Ascending aorta (tissue), 2 donors: ENCODE measurements at regions of chr12 and their contacts with region 1.

Region 1: DNA sequence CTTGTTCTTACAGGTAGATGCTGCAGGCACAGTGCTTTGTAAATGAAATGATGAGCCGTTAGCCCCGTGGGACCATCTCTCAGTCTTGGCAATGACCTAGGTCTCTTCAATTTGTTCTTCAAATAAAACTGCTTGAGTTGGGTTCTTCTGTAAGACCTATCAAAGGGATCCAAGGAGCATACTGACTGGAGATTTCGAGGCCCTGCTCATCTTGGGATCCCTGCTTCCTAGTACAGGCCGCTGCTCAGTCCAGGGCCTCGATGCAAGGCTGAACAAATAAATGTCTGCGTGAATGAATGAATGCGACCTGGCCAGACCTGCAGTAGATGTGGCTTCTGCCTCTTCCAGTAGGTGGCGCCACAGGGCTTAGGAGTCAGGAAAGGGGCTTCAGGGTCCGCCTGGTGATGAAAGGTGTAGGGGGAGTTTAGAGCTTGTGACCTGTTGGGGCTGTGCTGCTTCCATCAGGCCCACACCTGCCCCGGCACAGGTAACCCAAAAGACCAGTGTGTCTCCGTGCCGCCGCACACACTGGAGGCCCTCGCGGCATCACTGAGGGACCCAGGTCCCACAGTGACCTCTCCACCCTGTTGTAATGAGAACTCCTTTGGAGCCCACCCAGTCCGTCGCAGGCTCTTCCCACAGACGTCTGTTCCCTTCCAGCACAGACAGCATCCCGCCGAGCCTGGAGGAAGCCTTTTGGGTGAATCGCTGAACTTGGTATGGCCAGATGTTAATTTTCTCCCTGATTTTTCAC is 4.4 kb downstream of the CACNA1C start:
- DNase-seq: peak in 1 of 2 donors; percentile 81
- H3K4me3 ChIP-seq: peak overlapping the region in 1 of 2 donors; percentile 99
- H3K27ac ChIP-seq: peak overlapping the region; percentile 77 to 99
- H3K4me1 ChIP-seq: peaks cover 12 to 41% of the 10 kb centered on the region in 2 donors
- H3K27me3 ChIP-seq: no peaks in the 10 kb centered on the region
- CTCF ChIP-seq: peak; percentile 89 to 91 (median 90)

Region 2: GRCh38 chr12:1690578-1691122 is 366.6 kb before region 1 on chr12 and contains the start of gene ADIPOR2:
- intact Hi-C with region 1: no loop called
- DNase-seq: peak; percentile 79 to 98
- H3K4me3 ChIP-seq: peak within 1 kb of the TSS; percentile 86 to 95
- H3K27ac ChIP-seq: peak within 1 kb of the TSS; percentile 88 to 95
- H3K4me1 ChIP-seq: peaks cover 0 to 10% of the 10 kb centered on the region in 2 donors
- H3K27me3 ChIP-seq: no peaks in the 10 kb centered on the region
- CTCF ChIP-seq: no peak
- total RNA-seq, gene ADIPOR2: 25.7 TPM

Region 3: GRCh38 chr12:1993341-1993740 is 63.9 kb before region 1 on chr12:
- intact Hi-C with region 1: no loop called
- DNase-seq: no peak
- H3K4me3 ChIP-seq: no peak overlapping the region
- H3K27ac ChIP-seq: no peak overlapping the region
- H3K4me1 ChIP-seq: peaks cover 0 to 2% of the 10 kb centered on the region in 2 donors
- H3K27me3 ChIP-seq: no peaks in the 10 kb centered on the region
- CTCF ChIP-seq: no peak

Region 4: DNA sequence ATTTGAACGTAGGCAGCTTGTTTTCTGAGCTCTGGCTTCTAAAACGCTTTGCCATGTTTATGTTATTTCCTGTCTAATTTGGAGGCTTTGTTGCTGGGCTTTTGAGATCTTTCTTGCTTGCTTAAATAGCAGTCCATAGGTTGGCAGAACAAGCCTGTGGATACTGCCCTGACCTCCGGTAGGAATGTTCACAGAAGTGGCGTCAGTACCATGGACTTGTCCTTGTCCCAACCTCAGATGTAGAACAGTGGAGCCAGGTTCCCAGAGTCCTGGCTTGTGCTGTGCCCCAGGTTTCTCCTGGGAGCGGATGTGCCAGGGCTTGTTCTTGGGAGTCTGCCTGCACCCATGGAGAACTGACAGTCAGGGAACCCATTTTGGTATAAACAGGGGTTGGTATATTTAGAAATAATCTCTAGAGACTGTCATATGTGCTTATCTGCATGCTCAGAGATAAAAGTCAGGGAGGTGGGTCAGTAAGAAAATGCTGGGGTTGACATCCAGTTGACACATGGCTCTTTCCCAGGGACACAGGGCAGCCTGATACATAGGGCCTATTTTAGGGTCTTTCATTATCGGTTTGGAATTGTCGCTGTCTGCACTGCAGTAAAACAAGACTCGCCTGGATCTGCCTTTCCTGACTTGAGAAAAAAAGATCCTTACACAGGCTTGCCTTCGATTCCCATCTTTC is 18.4 kb after region 1 on chr12:
- intact Hi-C with region 1: loop called (anchors 2 kb)
- DNase-seq: peak; percentile 49 to 88
- H3K4me3 ChIP-seq: peak overlapping the region; percentile 18 to 38
- H3K27ac ChIP-seq: peak overlapping the region; percentile 91 to 94
- H3K4me1 ChIP-seq: peaks cover 4 to 44% of the 10 kb centered on the region in 2 donors
- H3K27me3 ChIP-seq: no peaks in the 10 kb centered on the region
- CTCF ChIP-seq: no peak

Region 5: GRCh38 chr12:2115101-2115845 is 58.1 kb after region 1 on chr12:
- intact Hi-C with region 1: loop called (anchors 2 kb)
- DNase-seq: no peak
- H3K4me3 ChIP-seq: no peak overlapping the region
- H3K27ac ChIP-seq: no peak overlapping the region
- H3K4me1 ChIP-seq: peaks cover 21 to 69% of the 10 kb centered on the region in 2 donors
- H3K27me3 ChIP-seq: no peaks in the 10 kb centered on the region
- CTCF ChIP-seq: no peak

Region 6: GRCh38 chr12:2179953-2180736 is 122.9 kb after region 1 on chr12:
- intact Hi-C with region 1: loop called (anchors 5 kb)
- DNase-seq: peak; percentile 47 to 93
- H3K4me3 ChIP-seq: no peak overlapping the region
- H3K27ac ChIP-seq: peak overlapping the region; percentile 73 to 80
- H3K4me1 ChIP-seq: peaks cover 25 to 33% of the 10 kb centered on the region in 2 donors
- H3K27me3 ChIP-seq: no peaks in the 10 kb centered on the region
- CTCF ChIP-seq: no peak

Region 7: GRCh38 chr12:2284857-2285256 is 227.6 kb after region 1 on chr12:
- intact Hi-C with region 1: loop called (anchors 5 kb)
- DNase-seq: peak in 1 of 2 donors; percentile 88
- H3K4me3 ChIP-seq: no peak overlapping the region
- H3K27ac ChIP-seq: peak overlapping the region; percentile 35 to 77
- H3K4me1 ChIP-seq: peaks cover 9 to 65% of the 10 kb centered on the region in 2 donors
- H3K27me3 ChIP-seq: no peaks in the 10 kb centered on the region
- CTCF ChIP-seq: peak; percentile 53 to 67 (median 57)